ENCODE measurements at regions of chr2 and their contacts with region 1.

Region 1: DNA sequence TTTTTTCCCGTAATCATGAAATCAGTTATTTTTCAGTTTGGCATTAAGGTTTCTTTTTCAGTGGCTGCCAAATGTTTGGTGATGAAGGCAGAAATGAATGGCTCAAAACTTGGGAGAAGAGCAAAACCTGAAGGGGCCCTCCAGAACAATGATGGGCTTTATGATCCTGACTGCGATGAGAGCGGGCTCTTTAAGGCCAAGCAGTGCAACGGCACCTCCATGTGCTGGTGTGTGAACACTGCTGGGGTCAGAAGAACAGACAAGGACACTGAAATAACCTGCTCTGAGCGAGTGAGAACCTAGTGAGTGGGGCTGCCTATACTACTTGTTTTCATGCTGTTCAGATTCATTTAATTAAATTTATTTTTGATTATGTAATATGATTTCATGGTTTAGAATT is 29.2 kb upstream of the MSH2 start:
- DNase-seq: peak; percentile 49
- ATAC-seq: peak; percentile 11
- H3K4me3 Mint-ChIP-seq: no peak overlapping the region
- H3K27ac Mint-ChIP-seq: peak overlapping the region; percentile 20; the same call in 1 of the 2 replicates
- H3K4me1 Mint-ChIP-seq: peaks cover 24% of the 10 kb centered on the region
- H3K27me3 Mint-ChIP-seq: peaks cover 9% of the 10 kb centered on the region
- CTCF ChIP-seq: no peak

Region 2: DNA sequence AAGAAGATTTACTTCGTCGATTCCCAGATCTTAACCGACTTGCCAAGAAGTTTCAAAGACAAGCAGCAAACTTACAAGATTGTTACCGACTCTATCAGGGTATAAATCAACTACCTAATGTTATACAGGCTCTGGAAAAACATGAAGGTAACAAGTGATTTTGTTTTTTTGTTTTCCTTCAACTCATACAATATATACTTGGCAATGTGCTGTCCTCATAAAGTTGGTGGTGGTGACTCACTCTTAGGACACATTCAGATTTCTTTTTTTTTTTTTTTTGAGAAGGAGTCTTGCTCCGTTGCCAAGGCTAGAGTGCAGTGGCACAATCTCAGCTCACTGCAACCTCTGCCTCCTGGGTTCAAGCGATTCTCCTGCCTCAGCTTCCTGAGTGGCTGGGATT is 56.0 kb after region 1 on chr2:
- CTCF ChIA-PET with region 1: no interaction called
- POLR2A ChIA-PET with region 1: no interaction called
- DNase-seq: no peak
- ATAC-seq: no peak
- H3K4me3 Mint-ChIP-seq: no peak overlapping the region
- H3K27ac Mint-ChIP-seq: no peak overlapping the region; the same call in 1 of the 2 replicates
- H3K4me1 Mint-ChIP-seq: no peaks in the 10 kb centered on the region; the same call in 1 of the 2 replicates
- H3K27me3 Mint-ChIP-seq: no peaks in the 10 kb centered on the region
- CTCF ChIP-seq: no peak

Region 3: DNA sequence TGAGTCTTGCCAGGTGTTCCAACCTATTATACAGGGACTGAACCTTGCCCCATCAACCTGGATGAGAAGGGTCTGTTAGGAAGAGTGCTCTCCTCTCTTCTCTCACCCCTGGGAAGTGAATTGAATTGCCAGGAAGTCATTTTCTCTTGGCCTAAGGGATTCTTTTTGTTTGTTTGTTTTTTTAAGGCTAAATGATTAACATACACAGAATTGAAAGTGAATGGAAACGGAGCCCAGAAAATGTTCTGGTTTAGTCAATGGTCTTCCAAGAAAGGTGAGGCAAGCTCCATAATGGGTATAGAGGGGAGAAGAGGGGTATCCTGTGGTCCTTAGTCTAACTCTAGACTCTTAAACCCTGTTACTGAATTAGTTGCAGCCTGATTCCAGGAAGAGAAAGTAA is 1591.5 kb after region 1 on chr2:
- CTCF ChIA-PET with region 1: no interaction called
- POLR2A ChIA-PET with region 1: interaction called, 11 read pairs
- DNase-seq: no peak
- ATAC-seq: peak; percentile 61
- H3K4me3 Mint-ChIP-seq: no peak overlapping the region
- H3K27ac Mint-ChIP-seq: no peak overlapping the region
- H3K4me1 Mint-ChIP-seq: peaks cover 14% of the 10 kb centered on the region
- H3K27me3 Mint-ChIP-seq: no peaks in the 10 kb centered on the region
- CTCF ChIP-seq: no peak

Measured in WTC11 (cell line).